Astrocyte of the cerebellum (primary cell): ENCODE measurements at regions of chr3 and their contacts with region 1.

Region 1: DNA sequence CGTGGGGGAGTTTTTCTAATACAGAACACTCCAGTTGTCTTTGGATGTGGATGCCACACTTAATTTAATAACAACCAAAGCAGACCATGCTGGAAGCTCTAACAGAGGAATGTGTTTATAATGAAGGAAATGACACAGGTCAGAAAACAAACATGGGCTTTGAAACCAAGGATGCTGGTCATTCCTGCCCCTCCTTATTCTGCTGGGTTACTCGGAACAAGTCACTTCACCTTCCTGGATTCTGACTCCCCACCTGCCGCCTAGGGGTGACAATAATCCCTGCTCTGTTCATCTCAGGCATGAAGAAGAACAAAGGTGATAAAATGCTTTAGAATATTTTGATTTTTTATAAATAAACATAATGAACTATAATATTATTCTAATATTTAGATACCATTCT is 240.9 kb upstream of the ADAMTS9 start:
- DNase-seq: no peak
- H3K4me3 ChIP-seq: no peak overlapping the region
- CTCF ChIP-seq: no peak

Region 2: DNA sequence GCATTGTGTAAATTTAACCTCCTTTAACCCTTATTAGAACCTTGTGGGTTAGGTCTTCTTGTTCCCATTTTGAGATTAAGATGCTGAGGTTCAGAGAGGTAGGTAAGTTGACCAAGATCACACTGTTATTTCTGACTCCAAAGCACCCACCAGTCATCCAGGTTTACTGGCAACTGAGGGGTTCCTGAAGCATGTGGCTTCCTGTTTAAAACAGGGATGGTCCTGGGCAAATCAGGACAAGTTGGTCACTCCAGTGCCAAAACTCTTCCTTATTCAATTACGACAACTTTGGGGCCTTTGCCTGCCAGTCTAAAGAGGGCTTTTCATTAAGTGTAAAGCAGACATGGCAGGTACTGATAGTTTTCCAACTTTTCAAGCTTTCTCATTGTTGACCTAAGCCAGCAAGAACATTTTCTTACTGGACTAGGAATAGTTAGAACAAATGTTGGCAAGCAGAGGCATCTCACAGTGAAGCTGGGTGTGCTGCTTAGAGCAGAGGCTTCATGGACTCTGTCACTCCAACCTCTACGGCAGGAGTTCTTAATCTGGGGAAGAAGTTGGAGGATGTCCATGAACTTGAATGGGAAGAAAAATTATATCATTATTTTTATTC is 91.5 kb before region 1 on chr3:
- in situ Hi-C with region 1: no loop called
- DNase-seq: no peak
- H3K4me3 ChIP-seq: no peak overlapping the region
- CTCF ChIP-seq: no peak

Region 3: DNA sequence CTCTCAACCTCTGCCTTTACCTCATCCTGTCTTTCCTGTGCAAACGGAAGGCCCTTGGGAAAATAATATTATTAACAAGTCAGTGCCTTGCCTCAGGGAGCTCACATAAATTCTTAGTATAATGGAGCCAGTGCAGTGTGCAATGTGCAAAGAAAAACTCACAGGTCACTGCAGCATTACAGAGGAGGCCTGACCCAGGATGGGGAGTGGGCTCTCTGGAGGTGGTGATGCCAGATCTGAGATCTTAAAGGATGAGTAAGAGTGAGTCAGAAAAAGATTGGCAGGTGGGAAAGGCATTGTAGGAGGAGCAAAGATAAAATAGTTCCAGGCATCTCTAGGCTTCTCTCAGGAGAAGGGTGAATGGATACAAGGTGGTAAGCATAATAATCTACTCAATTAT is 55.3 kb before region 1 on chr3:
- in situ Hi-C with region 1: loop called (anchors 5 kb)
- DNase-seq: no peak
- H3K4me3 ChIP-seq: no peak overlapping the region
- CTCF ChIP-seq: no peak

Region 4: DNA sequence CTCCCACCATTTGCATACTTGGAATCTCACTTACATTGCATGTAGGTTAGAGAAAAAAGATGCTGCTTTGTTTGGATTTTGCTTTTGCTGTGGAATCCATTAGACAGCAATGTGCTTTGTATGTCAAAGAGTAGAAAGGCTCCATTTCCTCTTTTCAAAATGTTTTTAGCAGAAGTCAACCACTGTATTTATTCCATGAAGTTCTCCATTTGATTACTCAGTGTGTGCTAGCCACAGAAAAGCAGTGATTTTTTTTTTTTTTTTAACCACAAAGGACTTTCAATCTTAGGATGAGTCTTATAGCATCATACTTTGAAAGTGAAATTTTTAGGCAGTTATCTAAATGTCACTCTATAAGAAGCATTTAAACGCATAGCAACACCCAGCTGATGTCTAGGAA is 44.1 kb after region 1 on chr3:
- in situ Hi-C with region 1: loop called (anchors 5 kb)
- DNase-seq: peak; percentile 34
- H3K4me3 ChIP-seq: no peak overlapping the region
- CTCF ChIP-seq: no peak